Aorta (tissue), 5 donors: ENCODE measurements at regions of chr11 and their contacts with region 1.

Region 1: GRCh38 chr11:64000026-64000739 is 13.9 kb downstream of the OTUB1 start:
- DNase-seq: peak; percentile 78 to 91
- ATAC-seq: peak; percentile 90
- H3K4me3 ChIP-seq: no peak overlapping the region
- H3K27ac ChIP-seq: no peak overlapping the region
- H3K4me1 ChIP-seq: no peaks in the 10 kb centered on the region
- H3K27me3 ChIP-seq: no peaks in the 10 kb centered on the region

Region 2: GRCh38 chr11:63793161-63793560 is 207.0 kb before region 1 on chr11:
- intact Hi-C with region 1: no loop called
- DNase-seq: no peak
- ATAC-seq: no peak
- H3K4me3 ChIP-seq: no peak overlapping the region
- H3K27ac ChIP-seq: no peak overlapping the region
- H3K4me1 ChIP-seq: no peaks in the 10 kb centered on the region
- H3K27me3 ChIP-seq: no peaks in the 10 kb centered on the region

Region 3: DNA sequence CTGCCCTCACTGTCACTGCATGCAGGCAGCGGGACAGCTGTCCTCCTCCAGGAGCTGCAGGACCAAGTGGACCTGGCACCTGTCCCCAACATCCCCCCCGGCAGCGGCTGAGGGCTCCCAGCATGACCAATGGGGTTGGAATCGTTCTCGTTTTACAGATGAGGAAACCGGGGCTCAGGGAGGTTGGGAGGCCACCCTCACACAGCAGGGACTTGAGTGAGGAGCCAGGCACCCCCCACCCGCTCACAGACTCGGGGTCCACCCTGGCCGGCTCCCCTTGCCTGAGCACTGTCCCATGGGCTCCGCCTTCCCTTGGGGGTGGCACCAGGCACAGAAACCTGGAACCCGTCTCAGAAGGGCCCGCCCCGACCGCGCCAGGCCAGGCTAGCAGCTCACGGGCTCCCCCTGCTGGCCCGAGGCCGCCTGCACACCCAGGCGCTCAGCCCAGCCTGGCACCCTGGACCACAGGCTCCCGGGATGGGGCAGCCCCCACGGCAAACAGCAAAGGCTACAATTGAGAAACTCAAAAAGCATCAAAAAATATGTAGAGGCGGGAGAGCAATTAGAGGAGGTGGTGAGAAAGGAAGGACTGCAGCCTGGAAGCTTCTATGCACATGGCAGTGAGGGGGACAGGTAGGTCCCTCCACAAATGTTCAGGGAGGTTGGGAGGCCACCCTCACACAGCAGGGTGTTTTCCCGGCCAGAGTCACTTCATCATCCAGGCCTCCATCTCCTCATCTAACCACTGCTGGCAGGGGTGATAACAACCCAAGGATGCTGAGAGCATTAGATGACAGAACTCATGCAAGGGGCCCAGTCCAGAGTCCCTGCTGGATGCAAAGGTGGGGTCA is 152.9 kb after region 1 on chr11:
- intact Hi-C with region 1: loop called (anchors 2 kb)
- DNase-seq: peak; percentile 71 to 92
- ATAC-seq: peak; percentile 89
- H3K4me3 ChIP-seq: no peak overlapping the region
- H3K27ac ChIP-seq: no peak overlapping the region
- H3K4me1 ChIP-seq: no peaks in the 10 kb centered on the region
- H3K27me3 ChIP-seq: no peaks in the 10 kb centered on the region